ENCODE measurements at regions of chr15 and their contacts with region 1.

Region 1: GRCh38 chr15:75201609-75202250 is at the start of gene C15orf39:
- DNase-seq: peak; percentile 80
- H3K4me3 Mint-ChIP-seq: peak within 1 kb of the TSS; percentile 89
- H3K27ac Mint-ChIP-seq: peak within 1 kb of the TSS; percentile 84
- H3K4me1 Mint-ChIP-seq: peaks cover 35% of the 10 kb centered on the region
- H3K27me3 Mint-ChIP-seq: no peaks in the 10 kb centered on the region
- total RNA-seq, gene C15orf39: 14.1 to 14.2 TPM

Region 2: DNA sequence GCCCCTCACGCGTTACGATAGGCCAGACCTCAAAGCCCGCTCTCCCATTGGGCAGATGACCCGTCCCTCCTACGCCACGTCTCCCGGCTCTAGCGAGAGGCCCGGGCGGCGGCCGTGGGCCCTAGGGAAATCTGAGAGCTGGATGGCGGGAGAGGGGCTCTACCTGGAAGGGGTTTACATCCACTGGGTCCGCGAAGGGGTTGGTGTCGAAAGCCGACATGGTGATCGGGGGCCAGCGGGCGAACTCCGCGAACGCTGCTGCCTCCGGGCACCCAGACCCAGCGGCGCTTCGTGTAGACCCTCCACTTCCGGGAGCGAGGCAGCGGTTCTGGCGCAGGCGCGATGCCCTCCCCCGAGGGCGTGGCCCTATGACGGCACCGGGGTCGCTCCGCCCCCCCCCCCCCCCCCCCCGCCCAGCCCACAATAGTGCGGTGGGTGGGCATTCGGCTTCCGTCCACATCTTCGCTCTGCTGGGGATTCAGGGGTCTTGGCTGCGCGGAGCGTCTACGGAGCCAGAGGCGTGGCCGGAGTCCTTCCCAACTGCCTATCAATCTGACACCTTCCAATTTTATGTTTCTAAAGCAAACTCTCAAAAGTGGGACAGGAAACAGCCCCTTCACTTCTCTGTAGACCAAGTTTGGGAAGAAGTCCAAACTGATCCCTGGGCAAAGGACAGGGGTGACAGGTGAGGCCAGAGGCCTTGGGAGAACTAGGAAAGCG is 328.5 kb before region 1 on chr15 and contains the start of gene SCAMP2:
- CTCF ChIA-PET with region 1: no interaction called
- POLR2A ChIA-PET with region 1: no interaction called
- intact Hi-C with region 1: loop called (anchors 10 kb)
- DNase-seq: peak; percentile 93
- H3K4me3 Mint-ChIP-seq: peak within 1 kb of the TSS; percentile 96
- H3K27ac Mint-ChIP-seq: peak within 1 kb of the TSS; percentile 90
- H3K4me1 Mint-ChIP-seq: peaks cover 45% of the 10 kb centered on the region
- H3K27me3 Mint-ChIP-seq: no peaks in the 10 kb centered on the region
- total RNA-seq, gene SCAMP2: 77.6 to 79.5 TPM

Region 3: GRCh38 chr15:74956648-74957300 is 245.0 kb before region 1 on chr15 and contains the start of gene RPP25:
- CTCF ChIA-PET with region 1: interaction called, 16 read pairs
- POLR2A ChIA-PET with region 1: interaction called, 5 read pairs
- intact Hi-C with region 1: loop called (anchors 2 kb)
- DNase-seq: peak; percentile 80
- H3K4me3 Mint-ChIP-seq: peak within 1 kb of the TSS; percentile 63
- H3K27ac Mint-ChIP-seq: no peak within 1 kb of the TSS
- H3K4me1 Mint-ChIP-seq: peaks cover 50% of the 10 kb centered on the region
- H3K27me3 Mint-ChIP-seq: peaks cover 21% of the 10 kb centered on the region
- total RNA-seq, gene RPP25: 3.8 TPM

Region 4: GRCh38 chr15:75023181-75023871 is 178.4 kb before region 1 on chr15 and contains the start of gene PPCDC:
- CTCF ChIA-PET with region 1: interaction called, 89 read pairs
- POLR2A ChIA-PET with region 1: interaction called, 30 read pairs
- intact Hi-C with region 1: no loop called
- DNase-seq: peak; percentile 97
- H3K4me3 Mint-ChIP-seq: peak within 1 kb of the TSS; percentile 89
- H3K27ac Mint-ChIP-seq: peak within 1 kb of the TSS; percentile 89
- H3K4me1 Mint-ChIP-seq: peaks cover 11% of the 10 kb centered on the region
- H3K27me3 Mint-ChIP-seq: no peaks in the 10 kb centered on the region
- total RNA-seq, gene PPCDC: 16.3 to 18.8 TPM

Region 5: DNA sequence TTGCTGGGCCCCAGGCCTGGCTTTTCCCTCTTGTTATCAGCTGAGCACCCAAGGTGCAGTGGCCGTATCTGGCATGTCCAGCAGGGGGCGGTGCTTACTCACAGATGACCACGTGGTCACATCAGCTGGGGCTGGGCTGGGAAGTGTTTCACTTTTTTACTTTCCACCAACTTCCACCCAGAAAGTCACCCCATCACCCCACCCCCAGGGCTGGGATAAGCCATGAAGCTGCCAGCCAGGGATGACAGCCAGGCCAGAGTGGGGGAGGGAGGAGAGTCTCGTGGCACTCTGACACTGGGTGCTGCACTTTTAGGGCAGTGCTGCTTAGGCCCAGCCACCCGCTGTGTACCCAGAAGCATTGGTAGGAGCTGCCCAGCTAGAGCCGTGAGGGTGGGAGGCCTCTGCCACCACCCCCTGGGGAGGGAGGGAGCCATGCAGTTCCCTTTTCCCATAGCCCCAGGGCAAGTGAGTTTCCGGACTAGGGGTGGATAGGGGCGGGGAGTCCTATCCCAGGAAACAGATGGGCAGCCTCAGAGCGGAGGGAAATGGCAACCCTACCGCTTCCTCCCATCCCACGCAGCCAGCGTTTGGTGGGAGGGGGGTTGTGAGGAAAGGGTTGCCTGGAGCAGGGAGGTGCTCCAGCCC is 172.2 kb before region 1 on chr15:
- CTCF ChIA-PET with region 1: interaction called, 89 read pairs
- POLR2A ChIA-PET with region 1: interaction called, 30 read pairs
- intact Hi-C with region 1: loop called (anchors 1 kb)
- DNase-seq: peak; percentile 91
- H3K4me3 Mint-ChIP-seq: no peak overlapping the region
- H3K27ac Mint-ChIP-seq: no peak overlapping the region
- H3K4me1 Mint-ChIP-seq: peaks cover 19% of the 10 kb centered on the region
- H3K27me3 Mint-ChIP-seq: no peaks in the 10 kb centered on the region

Region 6: DNA sequence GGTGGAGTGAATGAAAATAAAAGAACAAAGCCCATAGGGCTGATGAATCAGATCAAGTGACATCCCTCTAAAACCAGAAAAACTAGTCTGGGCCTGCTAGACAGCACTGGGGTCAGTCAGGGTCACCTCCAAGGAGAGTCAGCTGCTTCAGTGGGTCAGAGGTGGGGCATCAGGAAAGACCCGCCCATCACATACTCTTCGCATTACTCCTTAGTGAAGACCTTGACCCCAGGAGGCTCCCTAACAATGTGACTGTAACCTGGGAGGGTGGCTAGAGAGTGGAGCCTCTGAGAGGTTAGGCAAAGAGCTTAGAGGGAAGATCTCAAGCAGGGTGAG is 165.4 kb before region 1 on chr15:
- CTCF ChIA-PET with region 1: interaction called, 89 read pairs
- POLR2A ChIA-PET with region 1: interaction called, 3 read pairs
- intact Hi-C with region 1: no loop called
- DNase-seq: no peak
- H3K4me3 Mint-ChIP-seq: no peak overlapping the region
- H3K27ac Mint-ChIP-seq: no peak overlapping the region
- H3K4me1 Mint-ChIP-seq: peaks cover 21% of the 10 kb centered on the region
- H3K27me3 Mint-ChIP-seq: no peaks in the 10 kb centered on the region

Region 7: DNA sequence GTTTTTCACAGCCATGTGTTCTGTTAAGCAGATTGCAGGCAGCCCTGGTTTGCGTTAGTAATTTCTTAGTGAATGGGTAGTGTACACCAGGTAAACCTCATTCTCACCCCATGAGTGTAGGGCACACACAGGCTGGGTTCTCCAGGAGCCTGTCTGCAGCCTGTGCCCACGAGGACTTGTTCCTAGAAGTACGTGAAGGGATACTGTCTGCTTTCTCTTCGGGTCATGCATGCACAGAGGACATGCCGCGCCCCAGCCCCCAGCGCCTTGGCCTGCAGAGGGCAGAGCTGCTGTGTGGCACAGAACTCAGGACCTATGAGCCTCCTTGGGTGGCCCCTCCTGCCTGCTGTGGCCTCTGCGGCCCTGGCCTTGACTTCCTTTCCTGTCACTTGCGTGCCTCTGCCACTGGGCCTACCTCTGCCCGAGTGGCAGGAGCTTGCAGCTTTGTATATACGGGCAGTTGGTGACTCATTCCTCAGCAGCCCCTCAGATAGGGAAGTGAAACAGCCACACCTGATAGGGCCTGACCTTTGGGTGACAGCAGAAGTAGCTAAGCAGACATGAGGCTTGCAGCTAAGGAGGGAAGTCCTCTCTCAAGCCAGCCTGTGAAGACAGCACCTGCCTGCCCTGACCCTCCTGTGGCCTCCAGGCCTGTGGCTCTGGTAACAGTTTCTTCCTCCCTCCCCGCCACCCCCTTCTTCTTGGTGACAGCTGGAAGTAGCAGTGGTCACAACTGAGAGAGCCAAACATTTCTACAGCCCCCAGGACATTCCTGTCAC is 158.8 kb before region 1 on chr15:
- CTCF ChIA-PET with region 1: interaction called, 34 read pairs
- POLR2A ChIA-PET with region 1: interaction called, 4 read pairs
- intact Hi-C with region 1: loop called (anchors 1 kb)
- DNase-seq: peak; percentile 80
- H3K4me3 Mint-ChIP-seq: no peak overlapping the region
- H3K27ac Mint-ChIP-seq: no peak overlapping the region
- H3K4me1 Mint-ChIP-seq: peaks cover 34% of the 10 kb centered on the region
- H3K27me3 Mint-ChIP-seq: no peaks in the 10 kb centered on the region

Region 8: GRCh38 chr15:75167588-75168350 is 34.0 kb before region 1 on chr15:
- CTCF ChIA-PET with region 1: no interaction called
- POLR2A ChIA-PET with region 1: no interaction called
- intact Hi-C with region 1: no loop called
- DNase-seq: peak; percentile 59
- H3K4me3 Mint-ChIP-seq: no peak overlapping the region
- H3K27ac Mint-ChIP-seq: no peak overlapping the region
- H3K4me1 Mint-ChIP-seq: peaks cover 17% of the 10 kb centered on the region
- H3K27me3 Mint-ChIP-seq: no peaks in the 10 kb centered on the region

Measured in activated CD4-positive, alpha-beta memory T cell treated with anti-CD3 and anti-CD28 coated beads for 36 hours (primary cell).